ENCODE measurements at regions of chr2 and their contacts with region 1.

Region 1: GRCh38 chr2:227406177-227407031 is 18.7 kb upstream of the SCYGR1 start:
- DNase-seq: peak; percentile 83
- H3K4me3 ChIP-seq: no peak overlapping the region
- H3K27ac ChIP-seq: peak overlapping the region; percentile 24
- H3K4me1 ChIP-seq: peaks cover 4% of the 10 kb centered on the region
- H3K27me3 ChIP-seq: no peaks in the 10 kb centered on the region
- CTCF ChIP-seq: peak; percentile 60

Region 2: GRCh38 chr2:227447606-227448005 is 41.2 kb after region 1 on chr2:
- intact Hi-C with region 1: no loop called
- DNase-seq: no peak
- H3K4me3 ChIP-seq: no peak overlapping the region
- H3K27ac ChIP-seq: no peak overlapping the region
- H3K4me1 ChIP-seq: peaks cover 8% of the 10 kb centered on the region
- H3K27me3 ChIP-seq: no peaks in the 10 kb centered on the region
- CTCF ChIP-seq: no peak

Region 3: DNA sequence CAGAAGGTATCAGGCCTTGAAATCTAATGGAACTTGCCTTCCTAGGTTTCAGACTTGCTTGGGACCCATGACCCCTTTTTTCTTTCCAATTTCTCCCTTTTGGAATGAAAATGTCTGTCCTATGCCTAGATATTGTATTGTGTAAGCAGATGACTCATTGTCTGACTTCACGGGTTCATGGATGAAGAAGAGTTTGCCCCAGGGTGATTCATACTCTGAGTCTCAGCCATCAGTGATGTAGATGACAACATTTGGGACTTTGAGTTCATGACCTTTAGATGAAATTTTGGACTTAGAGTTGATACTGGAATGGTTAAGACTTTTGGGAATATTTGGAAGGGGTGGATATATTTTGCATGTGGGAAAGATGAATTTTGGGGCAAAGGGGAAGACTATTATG is 249.1 kb after region 1 on chr2:
- intact Hi-C with region 1: loop called (anchors 10 kb)
- DNase-seq: no peak
- H3K4me3 ChIP-seq: no peak overlapping the region
- H3K27ac ChIP-seq: no peak overlapping the region
- H3K4me1 ChIP-seq: no peaks in the 10 kb centered on the region
- H3K27me3 ChIP-seq: no peaks in the 10 kb centered on the region
- CTCF ChIP-seq: no peak

Region 4: DNA sequence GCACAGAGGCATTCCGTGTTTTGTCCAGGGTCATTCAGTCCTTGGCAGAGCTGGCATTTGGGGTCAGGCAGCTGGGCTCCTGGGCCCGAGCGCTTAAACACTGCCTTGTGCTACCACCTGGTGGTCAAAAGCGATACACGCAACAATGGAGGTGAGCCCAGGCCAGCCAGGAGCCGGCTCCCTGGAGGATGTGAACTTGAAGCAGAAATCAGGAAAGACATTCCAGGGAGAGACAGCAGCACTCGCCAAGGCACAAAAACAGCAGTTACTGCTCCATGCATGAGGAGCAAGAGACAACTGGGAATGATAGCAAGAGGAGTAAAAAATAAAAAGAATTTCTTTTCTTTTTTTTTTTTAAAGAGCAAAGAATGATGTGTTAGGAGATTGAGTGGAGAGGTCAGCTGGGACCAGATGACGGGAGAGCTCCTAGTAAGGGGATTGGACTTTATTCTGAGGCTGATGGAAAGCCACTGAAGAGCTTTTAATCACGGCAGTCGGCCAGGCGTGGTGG is 360.0 kb after region 1 on chr2:
- intact Hi-C with region 1: loop called (anchors 5 kb)
- DNase-seq: peak; percentile 88
- H3K4me3 ChIP-seq: no peak overlapping the region
- H3K27ac ChIP-seq: no peak overlapping the region
- H3K4me1 ChIP-seq: no peaks in the 10 kb centered on the region
- H3K27me3 ChIP-seq: no peaks in the 10 kb centered on the region
- CTCF ChIP-seq: peak; percentile 92

Region 5: DNA sequence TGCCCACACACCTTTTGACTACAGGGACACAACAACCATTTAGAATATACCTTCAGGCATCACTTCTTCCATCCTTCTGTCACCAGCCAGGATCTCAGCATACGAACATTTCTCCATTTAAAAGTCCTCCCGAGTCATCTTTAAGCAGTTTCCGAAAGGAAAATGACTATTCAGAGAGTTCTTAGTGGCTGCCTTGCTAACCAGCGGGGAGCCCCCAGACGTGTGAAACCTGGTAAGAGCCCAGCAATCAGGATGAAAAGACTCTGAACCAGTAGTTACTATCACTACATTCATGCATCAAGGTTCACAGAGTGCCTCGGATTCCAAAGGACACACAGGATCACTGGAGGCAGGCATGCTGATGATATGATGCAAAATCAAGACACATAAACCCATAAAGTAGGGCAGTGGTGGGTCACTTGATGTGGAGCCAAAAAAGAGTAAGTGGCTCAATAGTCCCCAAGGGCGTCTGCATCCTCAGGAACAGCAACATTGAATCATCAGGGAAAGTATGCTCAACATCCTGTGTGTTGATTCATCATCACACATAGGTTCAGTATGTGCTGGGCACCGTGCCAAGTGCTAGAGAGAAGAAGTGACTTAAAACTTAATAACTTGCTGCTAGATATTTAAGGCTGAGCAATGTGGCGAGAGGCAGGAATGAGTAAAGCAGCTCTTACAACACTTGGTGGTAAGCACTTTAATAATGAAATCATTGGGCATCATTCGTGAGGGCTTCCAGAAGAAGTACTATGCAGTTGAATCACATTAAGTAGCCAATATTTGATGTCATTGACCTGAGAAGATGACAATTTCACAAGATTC is 411.7 kb after region 1 on chr2:
- intact Hi-C with region 1: no loop called
- DNase-seq: peak; percentile 79
- H3K4me3 ChIP-seq: no peak overlapping the region
- H3K27ac ChIP-seq: peak overlapping the region; percentile 18
- H3K4me1 ChIP-seq: no peaks in the 10 kb centered on the region
- H3K27me3 ChIP-seq: no peaks in the 10 kb centered on the region
- CTCF ChIP-seq: no peak

Region 6: GRCh38 chr2:227862227-227862740 is 455.9 kb after region 1 on chr2:
- intact Hi-C with region 1: loop called (anchors 10 kb)
- DNase-seq: peak; percentile 63
- H3K4me3 ChIP-seq: no peak overlapping the region
- H3K27ac ChIP-seq: no peak overlapping the region
- H3K4me1 ChIP-seq: no peaks in the 10 kb centered on the region
- H3K27me3 ChIP-seq: no peaks in the 10 kb centered on the region
- CTCF ChIP-seq: peak; percentile 75